Gastrocnemius medialis (tissue), 4 donors: ENCODE measurements at regions of chr9 and their contacts with region 1.

Region 1: DNA sequence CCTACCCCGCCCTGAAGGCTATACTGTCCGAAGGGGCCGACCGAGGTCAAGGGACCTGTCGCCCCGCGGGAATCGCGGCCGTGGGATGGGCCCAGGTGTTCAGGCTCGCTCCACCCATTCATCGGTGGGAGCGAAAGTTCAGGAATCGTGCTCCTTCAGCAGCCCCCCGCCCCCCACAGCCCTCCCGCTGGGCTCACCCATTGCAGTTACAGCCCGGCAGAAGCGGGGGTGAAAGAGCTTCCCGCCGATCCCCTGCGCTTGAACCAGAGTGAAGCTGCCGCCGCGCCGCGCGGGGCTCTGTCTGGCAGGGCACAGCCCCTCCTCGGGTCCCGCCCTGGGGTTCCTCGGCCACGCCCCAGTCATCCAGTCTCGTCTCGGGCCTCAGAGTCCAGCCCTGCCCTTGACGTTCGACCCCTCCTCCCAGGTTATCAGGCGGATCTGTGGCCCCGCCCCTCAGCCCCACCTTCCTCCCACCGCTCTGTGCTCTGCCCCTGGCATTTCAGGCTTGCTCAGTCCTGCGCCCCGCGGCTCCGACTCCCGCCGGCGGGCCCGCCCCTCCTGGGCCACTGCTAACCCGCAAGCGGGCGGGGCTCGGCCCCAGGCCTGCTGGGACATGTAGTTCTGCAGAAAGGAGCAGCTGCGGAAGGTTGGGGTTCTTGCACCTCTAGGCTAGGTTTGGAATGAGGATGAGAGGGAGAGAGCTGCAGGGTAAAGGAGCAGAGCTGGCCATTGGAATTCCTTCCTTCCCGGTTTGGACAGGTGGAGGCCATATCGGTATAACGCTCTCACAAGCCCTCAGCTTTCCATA is at the start of gene MYORG:
- DNase-seq: peak; percentile 95 to 98
- ATAC-seq: peak; percentile 64 to 66
- H3K4me3 ChIP-seq: peak within 1 kb of the TSS; percentile 72 to 85 (median 78)
- H3K27ac ChIP-seq: peak within 1 kb of the TSS; percentile 89 to 93 (median 92)
- H3K4me1 ChIP-seq: peaks cover 31 to 48% of the 10 kb centered on the region in 2 donors
- H3K27me3 ChIP-seq: no peaks in the 10 kb centered on the region
- CTCF ChIP-seq: peak in 1 of 5 experiments; percentile 4
- POLR2A ChIP-seq: peak; percentile 78 to 94
- total RNA-seq, gene MYORG: 8.6 to 149 (median 49.5) TPM

Region 2: GRCh38 chr9:34126207-34127034 is 250.4 kb before region 1 on chr9 and contains the start of gene DCAF12:
- in situ Hi-C with region 1: no loop called
- intact Hi-C with region 1: loop called (anchors 5 kb)
- DNase-seq: peak; percentile 81 to 86
- ATAC-seq: peak; percentile 96 to 98
- H3K4me3 ChIP-seq: peak within 1 kb of the TSS; percentile 69 to 99 (median 84)
- H3K27ac ChIP-seq: peak within 1 kb of the TSS; percentile 84 to 98 (median 90)
- H3K4me1 ChIP-seq: peaks cover 30 to 31% of the 10 kb centered on the region in 2 donors
- H3K27me3 ChIP-seq: no peaks in the 10 kb centered on the region
- CTCF ChIP-seq: peak in 1 of 5 experiments; percentile 23
- POLR2A ChIP-seq: peak; percentile 66 to 80
- total RNA-seq, gene DCAF12: 19.4 to 33.7 (median 26.7) TPM

Region 3: DNA sequence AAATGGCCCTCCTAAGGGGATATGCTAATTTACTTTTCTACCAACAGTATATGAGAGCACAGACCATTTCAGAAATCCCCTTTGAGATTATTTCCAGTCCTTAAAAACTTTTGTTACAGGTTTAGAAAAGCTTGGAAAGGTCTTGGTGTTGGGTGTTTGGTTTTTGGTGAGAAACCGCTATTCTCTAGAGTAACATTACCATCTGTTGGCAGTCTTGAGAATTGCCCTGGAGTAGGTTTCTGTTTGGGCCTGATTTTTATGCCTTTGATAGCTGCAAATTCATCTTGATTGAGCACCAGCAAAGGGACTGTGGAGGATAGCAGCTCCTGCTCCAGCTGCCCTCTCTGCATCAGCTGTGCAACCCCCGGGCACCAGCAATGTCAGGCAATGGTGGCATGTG is 39.4 kb before region 1 on chr9:
- in situ Hi-C with region 1: loop called (anchors 5 kb)
- intact Hi-C with region 1: loop called (anchors 1 kb)
- DNase-seq: no peak
- ATAC-seq: no peak
- H3K4me3 ChIP-seq: no peak overlapping the region
- H3K27ac ChIP-seq: no peak overlapping the region
- H3K4me1 ChIP-seq: peaks cover 16 to 24% of the 10 kb centered on the region in 2 donors
- H3K27me3 ChIP-seq: no peaks in the 10 kb centered on the region
- CTCF ChIP-seq: no peak
- POLR2A ChIP-seq: no peak

Region 4: DNA sequence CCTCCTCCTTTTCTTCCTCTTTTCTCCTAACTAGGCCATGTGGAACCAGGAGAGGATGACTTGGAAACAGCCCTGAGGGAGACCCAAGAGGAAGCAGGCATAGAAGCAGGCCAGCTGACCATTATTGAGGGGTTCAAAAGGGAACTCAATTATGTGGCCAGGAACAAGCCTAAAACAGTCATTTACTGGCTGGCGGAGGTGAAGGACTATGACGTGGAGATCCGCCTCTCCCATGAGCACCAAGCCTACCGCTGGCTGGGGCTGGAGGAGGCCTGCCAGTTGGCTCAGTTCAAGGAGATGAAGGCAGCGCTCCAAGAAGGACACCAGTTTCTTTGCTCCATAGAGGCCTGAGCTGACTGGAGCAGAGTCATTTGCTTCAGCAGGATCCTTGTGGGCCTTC is 33.7 kb before region 1 on chr9:
- in situ Hi-C with region 1: loop called in 3 of 4 experiments (anchors 5 kb)
- intact Hi-C with region 1: loop called (anchors 2 kb)
- DNase-seq: peak; percentile 48 to 90
- ATAC-seq: peak; percentile 69 to 81
- H3K4me3 ChIP-seq: peak overlapping the region in 1 of 4 donors; percentile 6
- H3K27ac ChIP-seq: peak overlapping the region; percentile 71 to 93 (median 80)
- H3K4me1 ChIP-seq: peaks cover 45 to 53% of the 10 kb centered on the region in 2 donors
- H3K27me3 ChIP-seq: no peaks in the 10 kb centered on the region
- CTCF ChIP-seq: no peak
- POLR2A ChIP-seq: no peak

Region 5: GRCh38 chr9:34458013-34458958 is 81.5 kb after region 1 on chr9 and contains the starts of genes DNAI1 and FAM219A:
- in situ Hi-C with region 1: no loop called
- intact Hi-C with region 1: loop called (anchors 5 kb)
- DNase-seq: peak; percentile 98
- ATAC-seq: peak; percentile 89 to 92
- H3K4me3 ChIP-seq: peak within 1 kb of the TSS; percentile 68 to 95 (median 80)
- H3K27ac ChIP-seq: peak within 1 kb of the TSS; percentile 79 to 94 (median 90)
- H3K4me1 ChIP-seq: peaks cover 38 to 53% of the 10 kb centered on the region in 2 donors
- H3K27me3 ChIP-seq: no peaks in the 10 kb centered on the region
- CTCF ChIP-seq: no peak
- POLR2A ChIP-seq: peak; percentile 97 to 98
- total RNA-seq, gene DNAI1: 0.49 TPM in 1 of 4 donors, not detected in the others
- total RNA-seq, gene FAM219A: 29.5 to 58.4 (median 41.8) TPM